CD8-positive, alpha-beta T cell (primary cell): ENCODE measurements at regions of chr11 and their contacts with region 1.

Region 1: GRCh38 chr11:34926101-34926830 is 9.8 kb downstream of the PDHX start:
- DNase-seq: peak in 3 of 9 experiments; percentile 12 to 73 (median 63)
- ATAC-seq: peak; percentile 71
- H3K4me3 ChIP-seq: no peak overlapping the region
- H3K4me3 Mint-ChIP-seq: no peak overlapping the region
- H3K27ac ChIP-seq: no peak overlapping the region
- H3K27ac Mint-ChIP-seq: no peak overlapping the region
- H3K4me1 ChIP-seq: peaks cover 3% of the 10 kb centered on the region
- H3K4me1 Mint-ChIP-seq: peaks cover 29% of the 10 kb centered on the region
- H3K27me3 ChIP-seq: no peaks in the 10 kb centered on the region
- H3K27me3 Mint-ChIP-seq: no peaks in the 10 kb centered on the region
- CTCF ChIP-seq: peak; percentile 96

Region 2: GRCh38 chr11:34357701-34358257 is 568.5 kb before region 1 on chr11 and contains the start of gene ABTB2:
- CTCF ChIA-PET with region 1: no interaction called
- POLR2A ChIA-PET with region 1: no interaction called
- intact Hi-C with region 1: no loop called
- DNase-seq: peak; percentile 94 to 98 (median 97)
- ATAC-seq: peak; percentile 89
- H3K4me3 ChIP-seq: peak within 1 kb of the TSS; percentile 65 to 86
- H3K4me3 Mint-ChIP-seq: peak within 1 kb of the TSS; percentile 87
- H3K27ac ChIP-seq: peak within 1 kb of the TSS; percentile 21 to 38
- H3K27ac Mint-ChIP-seq: peak within 1 kb of the TSS; percentile 74
- H3K4me1 ChIP-seq: peaks cover 22% of the 10 kb centered on the region
- H3K4me1 Mint-ChIP-seq: peaks cover 19% of the 10 kb centered on the region
- H3K27me3 ChIP-seq: peaks cover 18 to 26% of the 10 kb centered on the region in 2 experiments
- H3K27me3 Mint-ChIP-seq: peaks cover 43% of the 10 kb centered on the region
- CTCF ChIP-seq: no peak
- total RNA-seq, gene ABTB2: 2.2 to 2.7 TPM

Region 3: GRCh38 chr11:34940026-34940677 is 13.9 kb after region 1 on chr11:
- CTCF ChIA-PET with region 1: interaction called, 13 read pairs
- POLR2A ChIA-PET with region 1: interaction called, 3 read pairs
- intact Hi-C with region 1: no loop called
- DNase-seq: no peak
- ATAC-seq: no peak
- H3K4me3 ChIP-seq: no peak overlapping the region
- H3K4me3 Mint-ChIP-seq: no peak overlapping the region
- H3K27ac ChIP-seq: no peak overlapping the region
- H3K27ac Mint-ChIP-seq: no peak overlapping the region
- H3K4me1 ChIP-seq: peaks cover 4% of the 10 kb centered on the region
- H3K4me1 Mint-ChIP-seq: peaks cover 34% of the 10 kb centered on the region
- H3K27me3 ChIP-seq: no peaks in the 10 kb centered on the region
- H3K27me3 Mint-ChIP-seq: no peaks in the 10 kb centered on the region
- CTCF ChIP-seq: no peak

Region 4: DNA sequence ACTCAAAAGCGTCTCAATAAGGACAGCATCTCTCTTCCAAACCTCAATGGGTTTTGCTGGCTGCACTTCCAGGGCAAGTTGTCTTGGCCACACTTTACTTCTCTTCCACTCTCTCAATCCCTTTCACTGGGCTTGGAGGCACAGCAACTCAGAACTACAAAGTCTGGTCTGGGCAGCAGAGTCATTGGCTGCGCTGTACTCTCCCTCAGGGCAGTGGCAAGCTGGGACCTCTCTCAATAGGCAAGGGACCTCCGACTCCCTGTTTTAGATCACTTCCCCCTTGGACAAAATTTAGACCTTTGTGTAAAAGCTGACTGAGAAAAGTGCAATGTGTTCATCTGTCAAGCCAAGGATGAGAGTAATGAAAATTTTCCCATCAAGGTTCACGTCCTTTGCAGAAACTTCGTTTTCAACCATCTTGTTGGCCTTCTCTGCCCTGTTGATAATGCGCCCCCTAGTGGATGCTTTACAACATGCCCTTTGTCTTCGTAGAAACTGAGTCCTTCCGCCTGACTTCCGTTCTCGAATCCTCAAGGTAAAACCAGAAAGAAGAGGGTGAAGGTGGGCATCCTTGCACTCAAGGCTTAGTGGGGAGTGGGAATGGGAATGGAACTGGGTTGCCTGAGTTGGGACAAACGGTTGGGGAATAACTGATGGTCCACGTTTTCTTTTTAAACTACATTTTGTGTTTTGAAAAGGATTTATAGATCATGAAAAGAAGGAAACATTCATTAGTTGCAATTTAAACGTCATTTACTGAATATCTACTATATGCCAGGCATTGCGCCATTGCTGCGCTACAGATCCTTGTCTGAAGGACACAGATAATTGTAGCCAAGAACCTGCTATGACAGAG is 311.8 kb after region 1 on chr11:
- CTCF ChIA-PET with region 1: interaction called, 4 read pairs
- POLR2A ChIA-PET with region 1: no interaction called
- intact Hi-C with region 1: loop called in 1 of 2 experiments (anchors 5 kb)
- DNase-seq: peak in 7 of 9 experiments; percentile 29 to 84 (median 62)
- ATAC-seq: no peak
- H3K4me3 ChIP-seq: no peak overlapping the region
- H3K4me3 Mint-ChIP-seq: no peak overlapping the region
- H3K27ac ChIP-seq: no peak overlapping the region
- H3K27ac Mint-ChIP-seq: no peak overlapping the region
- H3K4me1 ChIP-seq: peaks cover 46% of the 10 kb centered on the region
- H3K4me1 Mint-ChIP-seq: peaks cover 87% of the 10 kb centered on the region
- H3K27me3 ChIP-seq: no peaks in the 10 kb centered on the region
- H3K27me3 Mint-ChIP-seq: no peaks in the 10 kb centered on the region
- CTCF ChIP-seq: peak; percentile 65

Region 5: GRCh38 chr11:35485656-35486322 is 559.5 kb after region 1 on chr11:
- CTCF ChIA-PET with region 1: interaction called, 30 read pairs
- POLR2A ChIA-PET with region 1: no interaction called
- intact Hi-C with region 1: loop called (anchors 1 kb)
- DNase-seq: peak; percentile 34 to 80 (median 69)
- ATAC-seq: peak; percentile 68
- H3K4me3 ChIP-seq: no peak overlapping the region
- H3K4me3 Mint-ChIP-seq: no peak overlapping the region
- H3K27ac ChIP-seq: no peak overlapping the region
- H3K27ac Mint-ChIP-seq: no peak overlapping the region
- H3K4me1 ChIP-seq: no peaks in the 10 kb centered on the region
- H3K4me1 Mint-ChIP-seq: no peaks in the 10 kb centered on the region
- H3K27me3 ChIP-seq: no peaks in the 10 kb centered on the region
- H3K27me3 Mint-ChIP-seq: peaks cover 51% of the 10 kb centered on the region
- CTCF ChIP-seq: peak; percentile 97

Region 6: DNA sequence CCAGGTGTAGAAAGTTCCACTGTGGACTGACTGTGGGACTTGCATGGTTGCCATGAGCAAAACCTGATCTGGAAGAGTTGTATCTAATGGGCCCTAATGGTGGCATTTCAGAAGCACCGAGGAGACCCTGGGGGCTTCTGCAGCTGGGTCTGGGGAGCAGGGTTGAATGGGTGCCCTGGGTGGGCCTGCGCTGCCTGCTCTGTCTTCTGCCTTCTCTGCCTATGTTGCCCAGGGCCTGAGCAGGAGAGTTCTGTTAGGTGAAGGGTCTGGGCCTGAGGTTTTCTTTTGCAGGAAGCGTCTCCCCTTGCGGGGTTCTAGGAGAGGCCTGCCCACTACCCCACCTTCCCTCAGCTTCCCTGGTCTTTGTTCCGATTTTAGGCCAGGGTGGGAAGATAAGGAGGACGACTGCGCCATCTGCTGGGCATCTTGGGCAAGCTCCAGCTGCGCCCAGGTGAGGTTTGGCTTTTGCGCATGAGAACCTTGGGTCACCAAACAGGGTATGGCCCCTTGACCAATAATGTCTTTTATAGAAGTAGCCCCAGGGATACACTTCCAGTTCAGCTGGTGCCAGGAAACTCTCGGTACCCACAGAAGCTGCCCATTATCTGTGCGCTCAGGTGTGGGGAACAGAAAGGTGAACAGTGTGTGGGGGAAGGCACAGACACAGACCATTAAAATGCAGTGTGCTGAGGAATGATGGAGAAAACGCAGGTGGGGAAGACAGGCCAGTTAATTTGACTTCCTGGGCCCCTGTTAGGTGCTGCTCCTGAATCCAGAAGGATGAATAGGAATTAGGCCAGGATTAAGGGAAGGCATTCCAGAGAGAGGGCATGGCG is 1339.7 kb after region 1 on chr11:
- CTCF ChIA-PET with region 1: no interaction called
- POLR2A ChIA-PET with region 1: no interaction called
- intact Hi-C with region 1: loop called in 1 of 2 experiments (anchors 5 kb)
- DNase-seq: peak; percentile 13 to 72 (median 48)
- ATAC-seq: peak; percentile 63
- H3K4me3 ChIP-seq: no peak overlapping the region
- H3K4me3 Mint-ChIP-seq: no peak overlapping the region
- H3K27ac ChIP-seq: no peak overlapping the region
- H3K27ac Mint-ChIP-seq: no peak overlapping the region
- H3K4me1 ChIP-seq: no peaks in the 10 kb centered on the region
- H3K4me1 Mint-ChIP-seq: no peaks in the 10 kb centered on the region
- H3K27me3 ChIP-seq: no peaks in the 10 kb centered on the region
- H3K27me3 Mint-ChIP-seq: peaks cover 18% of the 10 kb centered on the region
- CTCF ChIP-seq: peak; percentile 71